MCF 10A (cell line): ENCODE measurements at regions of chr1 and their contacts with region 1.

Region 1: GRCh38 chr1:174074757-174075156 is 52.6 kb upstream of the RC3H1 start:
- DNase-seq: peak; percentile 52
- H3K4me3 Mint-ChIP-seq: no peak overlapping the region
- H3K27ac Mint-ChIP-seq: no peak overlapping the region
- H3K4me1 Mint-ChIP-seq: no peaks in the 10 kb centered on the region
- H3K27me3 Mint-ChIP-seq: peaks cover 16% of the 10 kb centered on the region
- CTCF ChIP-seq: peak; percentile 68

Region 2: GRCh38 chr1:173269490-173270230 is 805.1 kb before region 1 on chr1:
- CTCF ChIA-PET with region 1: no interaction called
- POLR2A ChIA-PET with region 1: no interaction called
- intact Hi-C with region 1: loop called (anchors 10 kb)
- DNase-seq: peak; percentile 95
- H3K4me3 Mint-ChIP-seq: no peak overlapping the region
- H3K27ac Mint-ChIP-seq: peak overlapping the region; percentile 71
- H3K4me1 Mint-ChIP-seq: peaks cover 32% of the 10 kb centered on the region
- H3K27me3 Mint-ChIP-seq: no peaks in the 10 kb centered on the region
- CTCF ChIP-seq: no peak

Region 3: DNA sequence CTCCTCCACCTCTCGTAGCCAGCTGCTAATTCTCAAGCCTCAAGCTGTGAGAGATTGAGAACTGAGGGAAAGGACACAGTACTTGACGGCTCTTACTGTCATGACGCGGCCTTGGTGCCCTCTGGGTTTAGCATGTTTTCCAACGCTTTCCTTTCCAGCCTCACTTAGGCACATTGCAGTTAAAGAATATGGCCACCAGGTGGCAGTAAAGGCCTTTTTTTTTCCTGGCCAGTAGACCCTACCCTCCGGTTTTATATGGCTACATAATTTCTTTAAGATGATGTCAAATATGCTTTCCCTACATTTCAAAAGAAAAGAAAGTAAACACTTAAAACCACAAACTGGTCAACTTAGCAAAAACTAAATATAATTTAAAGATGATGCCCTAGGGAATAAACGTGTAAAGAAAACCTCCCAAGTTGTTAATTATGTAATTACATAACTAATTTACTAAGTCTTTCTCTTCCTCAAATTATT is 654.4 kb before region 1 on chr1:
- CTCF ChIA-PET with region 1: interaction called, 3 read pairs
- POLR2A ChIA-PET with region 1: no interaction called
- intact Hi-C with region 1: loop called (anchors 1 kb)
- DNase-seq: peak; percentile 91
- H3K4me3 Mint-ChIP-seq: no peak overlapping the region
- H3K27ac Mint-ChIP-seq: peak overlapping the region; percentile 9
- H3K4me1 Mint-ChIP-seq: peaks cover 22% of the 10 kb centered on the region
- H3K27me3 Mint-ChIP-seq: no peaks in the 10 kb centered on the region
- CTCF ChIP-seq: peak; percentile 94

Region 4: GRCh38 chr1:173429471-173430402 is 645.0 kb before region 1 on chr1:
- CTCF ChIA-PET with region 1: no interaction called
- POLR2A ChIA-PET with region 1: no interaction called
- intact Hi-C with region 1: loop called (anchors 2 kb)
- DNase-seq: peak; percentile 91
- H3K4me3 Mint-ChIP-seq: peak overlapping the region; percentile 60
- H3K27ac Mint-ChIP-seq: peak overlapping the region; percentile 93
- H3K4me1 Mint-ChIP-seq: peaks cover 43% of the 10 kb centered on the region
- H3K27me3 Mint-ChIP-seq: no peaks in the 10 kb centered on the region
- CTCF ChIP-seq: peak; percentile 39

Region 5: DNA sequence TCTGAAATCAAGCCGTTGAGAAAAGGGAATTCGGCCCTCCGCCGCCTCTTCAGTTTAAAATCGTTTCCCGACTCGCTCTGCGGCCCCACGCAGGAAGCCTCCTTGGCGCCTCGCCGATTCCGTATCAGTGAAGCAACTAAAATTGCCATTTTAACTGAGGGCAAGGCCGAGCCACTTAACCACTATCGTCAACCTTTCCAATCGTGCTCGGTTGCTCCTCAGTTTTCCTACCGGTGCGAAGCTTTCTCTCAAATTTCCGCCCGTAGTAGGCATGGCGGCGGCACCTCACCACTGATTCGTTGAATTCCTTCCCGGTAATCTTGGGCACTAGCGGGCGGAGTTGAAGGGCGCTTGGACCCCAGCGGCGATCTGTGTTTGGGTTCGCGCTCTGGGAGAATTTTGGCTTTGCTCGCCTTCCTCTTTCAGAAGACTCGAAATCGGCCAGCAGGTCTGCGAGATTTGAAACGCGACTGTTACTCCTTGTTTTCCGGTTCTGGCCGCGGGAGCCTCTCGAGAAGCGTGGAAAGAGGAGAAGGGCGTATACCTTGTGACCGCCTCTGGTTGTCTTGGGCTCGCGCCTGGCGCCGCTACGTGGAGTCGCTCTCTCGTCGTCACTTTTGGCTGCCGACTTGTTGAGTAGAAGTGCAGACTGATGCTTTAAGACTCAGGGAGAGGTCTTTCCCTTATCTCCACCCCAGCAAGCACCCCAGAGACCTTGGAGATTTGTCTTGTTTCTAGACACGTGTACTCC is 250.3 kb before region 1 on chr1 and contains the starts of genes CENPL and DARS2:
- CTCF ChIA-PET with region 1: no interaction called
- POLR2A ChIA-PET with region 1: interaction called, 3 read pairs
- intact Hi-C with region 1: loop called (anchors 2 kb)
- DNase-seq: peak; percentile 100
- H3K4me3 Mint-ChIP-seq: peak within 1 kb of the TSS; percentile 97
- H3K27ac Mint-ChIP-seq: peak within 1 kb of the TSS; percentile 98
- H3K4me1 Mint-ChIP-seq: peaks cover 39% of the 10 kb centered on the region
- H3K27me3 Mint-ChIP-seq: no peaks in the 10 kb centered on the region
- CTCF ChIP-seq: no peak
- total RNA-seq, gene CENPL: 14.1 and 24.5 TPM in 2 replicates
- total RNA-seq, gene DARS2: 34.6 and 40.4 TPM in 2 replicates

Region 6: DNA sequence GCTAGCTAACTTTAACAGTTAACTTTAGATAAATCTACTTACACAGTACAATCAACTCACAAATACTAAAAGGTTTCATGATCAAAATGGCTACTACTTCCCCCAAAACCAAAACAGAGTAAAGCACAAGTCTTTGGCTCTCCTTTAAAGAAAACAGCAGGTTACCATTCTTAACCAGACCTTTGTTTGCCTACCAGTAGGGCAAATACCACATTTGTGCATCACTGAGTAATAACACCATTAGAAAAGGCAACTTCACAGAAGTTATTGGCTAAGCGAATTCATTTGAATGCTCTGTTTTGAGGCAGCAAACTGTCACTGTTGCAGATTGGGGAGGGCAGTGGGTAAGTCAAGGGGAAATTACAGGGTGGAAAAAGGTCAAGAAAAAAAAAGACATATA is 140.3 kb before region 1 on chr1:
- CTCF ChIA-PET with region 1: no interaction called
- POLR2A ChIA-PET with region 1: no interaction called
- intact Hi-C with region 1: no loop called
- DNase-seq: no peak
- H3K4me3 Mint-ChIP-seq: no peak overlapping the region
- H3K27ac Mint-ChIP-seq: no peak overlapping the region
- H3K4me1 Mint-ChIP-seq: no peaks in the 10 kb centered on the region
- H3K27me3 Mint-ChIP-seq: no peaks in the 10 kb centered on the region
- CTCF ChIP-seq: no peak

Region 7: GRCh38 chr1:173946380-173946921 is 128.3 kb before region 1 on chr1:
- CTCF ChIA-PET with region 1: interaction called, 3 read pairs
- POLR2A ChIA-PET with region 1: no interaction called
- intact Hi-C with region 1: loop called (anchors 5 kb)
- DNase-seq: peak; percentile 82
- H3K4me3 Mint-ChIP-seq: no peak overlapping the region
- H3K27ac Mint-ChIP-seq: peak overlapping the region; percentile 90
- H3K4me1 Mint-ChIP-seq: peaks cover 15% of the 10 kb centered on the region
- H3K27me3 Mint-ChIP-seq: no peaks in the 10 kb centered on the region
- CTCF ChIP-seq: no peak

Region 8: GRCh38 chr1:174022080-174022975 is 52.4 kb before region 1 on chr1 and contains the start of gene RC3H1:
- CTCF ChIA-PET with region 1: interaction called, 3 read pairs
- POLR2A ChIA-PET with region 1: interaction called, 5 read pairs
- intact Hi-C with region 1: loop called (anchors 2 kb)
- DNase-seq: peak; percentile 95
- H3K4me3 Mint-ChIP-seq: peak within 1 kb of the TSS; percentile 82
- H3K27ac Mint-ChIP-seq: peak within 1 kb of the TSS; percentile 95
- H3K4me1 Mint-ChIP-seq: peaks cover 38% of the 10 kb centered on the region
- H3K27me3 Mint-ChIP-seq: no peaks in the 10 kb centered on the region
- CTCF ChIP-seq: no peak
- total RNA-seq, gene RC3H1: 25.7 and 26.9 TPM in 2 replicates

Region 9: DNA sequence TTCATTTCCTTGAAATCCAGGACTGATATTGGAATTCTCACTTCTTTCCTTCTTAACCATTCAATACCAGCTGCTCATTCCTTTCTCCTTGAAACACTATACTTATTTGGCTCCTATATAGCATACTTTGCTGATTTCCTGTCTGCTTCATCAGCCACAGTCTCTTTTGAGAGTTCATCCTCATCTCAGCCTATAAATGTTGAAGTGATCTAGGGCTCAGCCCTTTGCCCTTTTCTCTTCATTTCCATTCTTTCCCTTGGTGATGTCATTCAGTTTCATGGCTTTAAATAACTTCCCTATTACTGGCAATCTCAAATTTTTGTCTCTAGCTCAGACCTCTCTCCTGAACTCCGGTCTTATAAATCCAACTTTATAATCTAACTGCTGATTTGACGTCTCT is 60.5 kb after region 1 on chr1:
- CTCF ChIA-PET with region 1: no interaction called
- POLR2A ChIA-PET with region 1: no interaction called
- intact Hi-C with region 1: no loop called
- DNase-seq: no peak
- H3K4me3 Mint-ChIP-seq: no peak overlapping the region
- H3K27ac Mint-ChIP-seq: no peak overlapping the region
- H3K4me1 Mint-ChIP-seq: no peaks in the 10 kb centered on the region
- H3K27me3 Mint-ChIP-seq: no peaks in the 10 kb centered on the region
- CTCF ChIP-seq: no peak